CD8-positive, alpha-beta memory T cell (primary cell): ENCODE measurements at regions of chr9 and their contacts with region 1.

Region 1: DNA sequence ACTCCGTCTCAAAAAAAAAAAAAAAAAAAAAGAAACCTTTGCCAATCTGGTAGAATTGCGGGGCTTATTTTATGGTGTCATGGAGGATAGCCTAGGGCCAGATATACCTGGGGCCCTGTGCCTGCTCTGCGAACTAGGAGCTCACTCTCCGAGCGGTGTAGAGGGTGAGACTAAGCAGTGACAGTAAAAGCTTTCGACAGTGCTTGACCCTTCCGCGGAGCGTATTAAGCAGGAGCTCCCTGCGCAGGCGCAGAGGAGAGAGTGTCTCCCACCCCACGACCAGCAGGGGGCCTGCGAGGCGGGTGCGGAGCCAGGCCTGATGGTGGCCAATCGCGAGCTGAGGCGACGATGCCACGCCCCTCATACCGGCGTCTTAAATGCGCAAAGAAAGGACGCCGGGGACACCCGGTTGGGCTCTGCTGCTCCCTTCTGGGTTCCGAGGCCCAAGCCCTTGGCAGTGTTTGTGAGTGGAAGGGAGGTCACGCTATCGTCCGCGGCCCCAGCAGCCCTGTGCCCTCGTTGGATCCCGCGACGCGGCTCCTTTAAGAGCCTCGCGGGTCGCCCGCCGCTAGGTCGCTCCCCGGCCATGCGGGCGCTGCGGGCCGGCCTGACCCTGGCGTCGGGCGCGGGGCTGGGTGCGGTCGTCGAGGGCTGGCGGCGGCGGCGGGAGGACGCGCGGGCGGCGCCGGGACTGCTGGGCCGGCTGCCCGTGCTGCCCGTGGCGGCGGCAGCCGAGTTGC is at the start of gene ENDOG:
- DNase-seq: peak; percentile 95 to 98 (median 97)
- H3K4me3 ChIP-seq: peak within 1 kb of the TSS; percentile 89
- H3K4me3 Mint-ChIP-seq: peak within 1 kb of the TSS; percentile 89 to 96 (median 91)
- H3K27ac ChIP-seq: peak within 1 kb of the TSS; percentile 47
- H3K27ac Mint-ChIP-seq: peak within 1 kb of the TSS; percentile 80 to 96 (median 93)
- H3K4me1 ChIP-seq: peaks cover 7% of the 10 kb centered on the region
- H3K4me1 Mint-ChIP-seq: peaks cover 9 to 26% (median 19%) of the 10 kb centered on the region in 3 donors
- H3K27me3 ChIP-seq: no peaks in the 10 kb centered on the region
- H3K27me3 Mint-ChIP-seq: peaks cover 0 to 3% of the 10 kb centered on the region in 2 donors
- total RNA-seq, gene ENDOG: 22.3 to 23.3 TPM

Region 2: DNA sequence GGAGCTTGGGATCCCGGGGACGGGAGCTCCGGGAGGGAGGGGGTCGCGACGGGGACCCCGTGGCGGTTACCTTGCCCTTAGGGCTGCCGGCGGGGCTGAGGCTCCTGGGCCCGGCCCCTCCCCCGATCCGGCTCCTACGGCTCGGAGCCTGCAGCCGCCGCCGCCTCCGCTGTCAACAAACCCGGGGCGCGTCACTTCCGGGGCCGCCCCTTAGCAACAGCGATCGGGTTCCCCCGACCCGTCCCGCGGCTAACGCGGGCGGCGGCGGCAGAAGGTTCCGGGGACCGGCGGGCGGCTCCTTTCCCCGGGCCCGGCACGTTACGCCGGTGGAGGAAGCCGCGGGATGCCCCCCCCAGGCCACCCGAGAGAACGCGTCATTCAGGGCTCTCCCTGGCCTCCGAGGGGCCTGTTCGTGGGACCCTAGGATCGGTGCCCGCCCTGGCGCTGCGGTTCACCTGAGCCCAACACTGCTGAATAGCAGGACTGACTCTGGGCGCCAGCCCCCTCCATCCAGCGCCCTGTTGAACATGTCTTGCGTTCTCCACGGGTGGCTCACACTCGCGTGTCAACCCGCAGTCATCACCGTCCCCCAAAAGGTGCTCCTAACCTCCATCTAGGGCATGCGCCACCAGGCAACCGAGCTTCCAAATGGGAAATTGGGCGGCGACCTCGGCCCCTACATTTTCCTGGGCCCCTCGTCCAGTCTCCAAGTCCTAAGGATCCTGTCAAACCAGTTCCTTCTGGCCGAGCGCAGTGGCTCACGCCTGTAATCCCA is 46.3 kb before region 1 on chr9 and contains the start of gene ZER1:
- CTCF ChIA-PET with region 1: interaction called, 19 read pairs
- POLR2A ChIA-PET with region 1: interaction called, 13 read pairs
- DNase-seq: peak; percentile 88 to 95 (median 91)
- H3K4me3 ChIP-seq: peak within 1 kb of the TSS; percentile 87
- H3K4me3 Mint-ChIP-seq: peak within 1 kb of the TSS; percentile 97 to 99 (median 97)
- H3K27ac ChIP-seq: peak within 1 kb of the TSS; percentile 95
- H3K27ac Mint-ChIP-seq: peak within 1 kb of the TSS; percentile 98 to 100 (median 99)
- H3K4me1 ChIP-seq: peaks cover 19% of the 10 kb centered on the region
- H3K4me1 Mint-ChIP-seq: peaks cover 31 to 42% (median 36%) of the 10 kb centered on the region in 3 donors
- H3K27me3 ChIP-seq: no peaks in the 10 kb centered on the region
- H3K27me3 Mint-ChIP-seq: no peaks in the 10 kb centered on the region
- total RNA-seq, gene ZER1: 18.3 to 18.7 TPM

Region 3: DNA sequence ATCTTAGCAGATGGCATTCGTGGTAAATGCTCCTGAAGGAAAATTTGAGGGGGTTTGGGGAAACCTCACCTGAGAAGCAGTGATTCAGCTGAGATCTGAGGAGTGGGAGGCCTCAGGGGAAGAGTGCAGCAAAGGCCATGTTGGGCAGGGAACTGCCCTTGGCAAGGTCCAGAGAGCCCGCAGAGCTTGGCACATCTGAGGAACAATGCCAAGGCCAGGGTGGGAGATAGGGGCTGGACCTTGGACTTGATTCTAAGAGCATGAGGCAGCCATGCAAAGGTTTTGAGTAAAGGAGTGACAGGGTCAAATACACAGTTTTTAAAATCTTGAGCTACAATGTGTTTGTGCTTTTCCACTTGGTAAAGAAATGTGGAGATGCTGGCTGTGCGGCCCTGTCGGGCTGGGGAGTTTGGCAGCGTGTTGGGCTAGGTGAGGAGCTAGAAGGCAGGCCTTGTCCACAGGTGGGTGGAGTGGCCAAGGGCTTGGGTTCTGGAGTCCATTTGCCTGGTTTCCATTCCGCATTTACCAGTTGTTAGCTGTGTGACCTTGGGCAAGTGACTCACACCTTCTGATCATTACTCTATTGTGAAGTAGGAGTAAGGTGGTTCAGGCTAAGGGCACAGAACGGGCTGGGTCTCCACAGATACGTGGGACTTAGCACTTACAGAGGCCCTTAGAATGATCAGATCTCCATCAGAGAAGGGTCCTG is 25.1 kb before region 1 on chr9:
- CTCF ChIA-PET with region 1: interaction called, 12 read pairs
- POLR2A ChIA-PET with region 1: interaction called, 3 read pairs
- DNase-seq: no peak
- H3K4me3 ChIP-seq: no peak overlapping the region
- H3K4me3 Mint-ChIP-seq: peak overlapping the region in 1 of 7 donors; percentile 80
- H3K27ac ChIP-seq: no peak overlapping the region
- H3K27ac Mint-ChIP-seq: peak overlapping the region in 5 of 8 donors; percentile 1 to 72 (median 52)
- H3K4me1 ChIP-seq: peaks cover 4% of the 10 kb centered on the region
- H3K4me1 Mint-ChIP-seq: peaks cover 12 to 31% (median 21%) of the 10 kb centered on the region in 3 donors
- H3K27me3 ChIP-seq: no peaks in the 10 kb centered on the region
- H3K27me3 Mint-ChIP-seq: no peaks in the 10 kb centered on the region

Region 4: GRCh38 chr9:128829477-128830251 is 11.4 kb after region 1 on chr9 and contains the start of gene SPOUT1:
- CTCF ChIA-PET with region 1: interaction called, 28 read pairs
- POLR2A ChIA-PET with region 1: interaction called, 39 read pairs
- DNase-seq: peak; percentile 90 to 96 (median 91)
- H3K4me3 ChIP-seq: peak within 1 kb of the TSS; percentile 94
- H3K4me3 Mint-ChIP-seq: peak within 1 kb of the TSS; percentile 91 to 99 (median 93)
- H3K27ac ChIP-seq: peak within 1 kb of the TSS; percentile 67
- H3K27ac Mint-ChIP-seq: peak within 1 kb of the TSS; percentile 62 to 96 (median 92)
- H3K4me1 ChIP-seq: peaks cover 17% of the 10 kb centered on the region
- H3K4me1 Mint-ChIP-seq: peaks cover 20 to 24% (median 21%) of the 10 kb centered on the region in 3 donors
- H3K27me3 ChIP-seq: no peaks in the 10 kb centered on the region
- H3K27me3 Mint-ChIP-seq: peaks cover 0 to 3% of the 10 kb centered on the region in 2 donors
- total RNA-seq, gene SPOUT1: 137 to 143 TPM

Region 5: GRCh38 chr9:128927731-128928411 is 109.6 kb after region 1 on chr9:
- CTCF ChIA-PET with region 1: interaction called, 12 read pairs
- POLR2A ChIA-PET with region 1: no interaction called
- DNase-seq: peak; percentile 20 to 67 (median 38)
- H3K4me3 ChIP-seq: no peak overlapping the region
- H3K4me3 Mint-ChIP-seq: no peak overlapping the region
- H3K27ac ChIP-seq: no peak overlapping the region
- H3K27ac Mint-ChIP-seq: peak overlapping the region in 1 of 8 donors; percentile 82
- H3K4me1 ChIP-seq: peaks cover 5% of the 10 kb centered on the region
- H3K4me1 Mint-ChIP-seq: peaks cover 6 to 9% (median 6%) of the 10 kb centered on the region in 3 donors
- H3K27me3 ChIP-seq: no peaks in the 10 kb centered on the region
- H3K27me3 Mint-ChIP-seq: no peaks in the 10 kb centered on the region